Activated T-helper 2 cell treated with anti-CD3 and anti-CD28 coated beads, Interferon-gamma antibody, Interleukin-2, Interleukin-4, amounts not matched to agents 10 μg/mL and 5 μg/mL and 100 μg/mL, durations not matched to agents 14 hours and 24 hours and 36 hours (primary cell): ENCODE measurements at regions of chr7 and their contacts with region 1.

Region 1: DNA sequence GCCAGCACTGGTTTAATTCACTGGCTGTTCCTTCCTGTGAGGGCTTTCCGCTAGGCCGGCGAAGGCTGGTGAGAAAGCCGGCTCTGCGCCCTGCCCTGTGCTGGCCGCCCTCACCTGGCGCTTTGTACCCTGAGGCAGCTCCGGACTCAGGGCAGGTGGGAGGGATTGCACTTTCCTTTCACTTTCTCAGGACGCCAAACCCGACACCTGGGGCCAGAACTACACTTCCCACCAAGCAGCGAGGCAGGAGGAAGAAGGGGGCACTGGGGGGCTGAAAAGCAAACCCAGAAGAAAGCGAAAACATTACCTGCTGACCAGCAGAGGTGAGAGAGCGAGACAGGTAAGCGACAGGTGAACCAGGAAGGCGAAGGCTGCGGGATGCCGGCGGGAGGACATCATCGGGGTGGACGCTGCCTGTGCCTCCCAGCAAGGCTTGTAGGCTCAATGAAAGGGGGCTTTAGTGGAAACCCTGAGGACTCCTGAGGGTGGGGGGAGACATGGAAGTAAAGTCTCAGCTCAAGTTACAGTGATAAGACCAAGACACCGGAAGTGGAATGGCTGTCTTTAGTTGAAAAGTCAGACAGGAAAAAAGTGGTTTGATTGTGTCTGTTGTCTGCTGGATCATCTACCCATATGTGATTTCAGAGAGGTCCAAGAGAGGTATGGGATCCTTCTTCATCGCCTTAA is at the start of gene RAB19:
- DNase-seq: peak; percentile 43
- H3K4me3 Mint-ChIP-seq: peak within 1 kb of the TSS; percentile 92
- H3K27ac Mint-ChIP-seq: peak within 1 kb of the TSS; percentile 95
- H3K4me1 Mint-ChIP-seq: peaks cover 42% of the 10 kb centered on the region
- H3K27me3 Mint-ChIP-seq: no peaks in the 10 kb centered on the region
- total RNA-seq, gene RAB19: 12.5 and 14.5 TPM in 2 replicates

Region 2: DNA sequence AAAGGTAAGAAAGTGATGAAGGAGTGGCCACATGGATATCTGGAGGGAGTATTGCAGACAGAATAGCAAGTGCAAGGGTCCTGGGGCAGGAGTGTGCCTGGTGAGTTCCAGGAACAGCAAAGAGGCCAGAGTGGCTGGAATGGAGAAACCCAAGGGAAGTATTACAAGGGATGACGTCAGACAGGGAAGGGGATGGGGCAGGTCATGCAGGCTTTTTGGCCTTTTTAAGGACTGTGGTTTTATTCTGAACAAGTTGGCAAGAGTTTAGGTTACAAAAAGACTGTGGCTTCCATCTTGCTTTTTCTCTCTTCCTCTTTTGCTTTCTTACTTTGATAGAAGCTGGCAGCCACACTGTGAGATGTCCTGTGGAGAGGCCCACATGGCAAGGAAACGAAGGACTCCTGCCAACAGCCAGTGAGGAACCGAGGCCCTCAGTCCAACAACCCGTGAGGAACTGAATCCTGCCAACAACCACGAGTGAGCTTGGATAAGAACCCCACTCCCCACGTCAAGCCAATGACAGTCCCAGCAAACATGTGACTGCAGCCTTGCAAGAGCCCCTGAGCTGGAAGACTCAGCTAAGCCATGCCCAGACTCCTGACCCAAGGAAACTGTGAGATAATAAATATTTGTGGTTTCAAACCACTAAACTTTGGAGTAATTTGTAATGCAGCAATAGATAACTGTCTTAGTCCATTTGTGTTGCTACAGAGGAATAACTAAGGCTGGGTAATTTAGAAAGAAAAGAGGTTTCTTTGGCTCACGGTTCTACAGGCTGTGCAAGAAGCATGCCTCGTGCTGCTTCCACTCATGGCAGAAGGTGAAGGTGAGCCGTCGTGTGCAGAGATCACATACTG is 207.4 kb before region 1 on chr7:
- intact Hi-C with region 1: no loop called
- DNase-seq: no peak
- H3K4me3 Mint-ChIP-seq: no peak overlapping the region
- H3K27ac Mint-ChIP-seq: no peak overlapping the region
- H3K4me1 Mint-ChIP-seq: peaks cover 7% of the 10 kb centered on the region
- H3K27me3 Mint-ChIP-seq: no peaks in the 10 kb centered on the region

Region 3: DNA sequence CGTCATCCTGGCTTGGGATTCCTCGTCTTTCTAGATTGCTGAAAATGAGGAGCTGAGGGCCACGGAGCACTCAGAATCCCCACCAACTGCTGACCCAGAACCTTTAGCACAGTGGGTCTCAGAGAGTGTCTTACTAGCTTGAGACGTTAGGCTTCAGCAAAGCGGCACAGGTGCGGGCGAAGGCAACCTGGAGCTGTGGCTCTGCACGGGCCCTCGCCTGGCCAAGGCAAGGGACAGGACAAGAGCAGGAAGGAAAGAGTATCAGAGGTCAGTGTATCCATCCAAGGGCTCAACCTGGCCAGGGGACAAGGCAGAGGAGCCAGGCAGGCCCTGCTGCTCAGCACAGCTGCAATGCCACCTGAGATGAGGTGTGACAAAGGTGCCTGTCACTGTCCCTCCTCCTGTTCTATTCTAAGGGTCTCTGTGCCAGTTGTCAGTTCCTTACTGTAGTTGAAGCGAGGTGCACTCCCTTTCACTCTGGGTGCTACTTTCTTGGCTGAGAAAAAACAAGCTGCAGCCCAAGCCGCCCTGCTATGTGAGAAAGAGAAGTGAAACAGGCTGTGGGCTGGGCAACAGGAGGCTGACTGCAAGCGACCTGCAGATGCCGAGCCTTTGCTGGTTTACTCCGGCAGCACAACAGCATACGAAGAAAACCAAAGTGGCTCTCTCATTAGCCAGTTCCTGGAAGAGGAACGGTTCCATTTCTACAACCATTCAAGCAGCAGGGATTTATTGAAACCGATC is 194.0 kb before region 1 on chr7:
- intact Hi-C with region 1: loop called (anchors 5 kb)
- DNase-seq: peak; percentile 62
- H3K4me3 Mint-ChIP-seq: peak overlapping the region; percentile 49
- H3K27ac Mint-ChIP-seq: peak overlapping the region; percentile 70
- H3K4me1 Mint-ChIP-seq: peaks cover 61% of the 10 kb centered on the region
- H3K27me3 Mint-ChIP-seq: peaks cover 3% of the 10 kb centered on the region

Region 4: GRCh38 chr7:140349144-140349771 is 54.8 kb before region 1 on chr7:
- intact Hi-C with region 1: no loop called
- DNase-seq: no peak
- H3K4me3 Mint-ChIP-seq: no peak overlapping the region
- H3K27ac Mint-ChIP-seq: peak overlapping the region; percentile 81
- H3K4me1 Mint-ChIP-seq: peaks cover 21% of the 10 kb centered on the region
- H3K27me3 Mint-ChIP-seq: no peaks in the 10 kb centered on the region

Region 5: GRCh38 chr7:140375892-140376730 is 27.9 kb before region 1 on chr7:
- intact Hi-C with region 1: loop called (anchors 1 kb)
- DNase-seq: peak; percentile 26
- H3K4me3 Mint-ChIP-seq: peak overlapping the region; percentile 65
- H3K27ac Mint-ChIP-seq: peak overlapping the region; percentile 97
- H3K4me1 Mint-ChIP-seq: peaks cover 51% of the 10 kb centered on the region
- H3K27me3 Mint-ChIP-seq: no peaks in the 10 kb centered on the region

Region 6: GRCh38 chr7:140439359-140439758 is 35.3 kb after region 1 on chr7:
- intact Hi-C with region 1: loop called (anchors 2 kb)
- DNase-seq: no peak
- H3K4me3 Mint-ChIP-seq: no peak overlapping the region
- H3K27ac Mint-ChIP-seq: peak overlapping the region; percentile 58
- H3K4me1 Mint-ChIP-seq: peaks cover 9% of the 10 kb centered on the region
- H3K27me3 Mint-ChIP-seq: no peaks in the 10 kb centered on the region

Region 7: DNA sequence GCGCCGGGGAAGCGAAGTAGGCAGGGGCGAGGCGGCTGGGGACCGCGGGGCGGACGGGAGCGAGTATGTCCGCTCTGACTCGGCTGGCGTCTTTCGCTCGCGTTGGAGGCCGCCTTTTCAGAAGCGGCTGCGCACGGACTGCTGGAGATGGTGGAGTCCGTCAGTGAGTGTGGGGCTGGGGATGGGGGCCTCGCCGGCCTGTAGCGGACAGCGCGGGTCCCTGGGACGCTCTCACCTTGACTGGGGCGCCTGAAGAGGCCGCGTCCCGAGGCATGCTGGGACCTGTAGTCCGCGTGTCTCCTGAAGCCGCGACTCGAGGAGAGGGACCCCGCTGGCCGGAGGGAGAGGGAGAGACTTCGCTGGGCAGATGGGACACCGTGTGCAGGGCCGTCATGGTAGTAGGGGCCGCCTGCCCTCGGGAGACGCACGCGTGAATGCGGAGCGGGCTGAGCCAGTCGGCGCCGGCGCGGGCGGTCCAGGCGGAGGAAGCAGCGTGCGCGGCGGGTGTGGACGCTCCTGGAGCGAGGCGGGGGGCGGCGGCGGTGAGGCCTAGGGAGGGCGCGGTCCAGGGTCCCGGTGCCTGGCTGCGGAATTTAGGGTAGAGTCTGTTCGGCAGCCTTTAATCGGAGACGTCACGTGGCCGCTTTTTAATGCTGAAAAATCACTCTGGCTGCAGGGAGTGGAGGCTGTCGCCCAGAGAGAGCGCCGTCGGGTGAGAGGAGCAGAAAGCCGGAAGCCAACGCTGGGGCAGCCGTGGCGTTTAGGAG is 292.8 kb after region 1 on chr7 and contains the start of gene NDUFB2:
- intact Hi-C with region 1: loop called (anchors 5 kb)
- DNase-seq: peak; percentile 86
- H3K4me3 Mint-ChIP-seq: peak within 1 kb of the TSS; percentile 99
- H3K27ac Mint-ChIP-seq: peak within 1 kb of the TSS; percentile 99
- H3K4me1 Mint-ChIP-seq: peaks cover 26% of the 10 kb centered on the region
- H3K27me3 Mint-ChIP-seq: no peaks in the 10 kb centered on the region
- total RNA-seq, gene NDUFB2: 172 and 178 TPM in 2 replicates